ENCODE measurements at regions of chr1 and their contacts with region 1.

Region 1: GRCh38 chr1:186386725-186387383 is 11.2 kb downstream of the ODR4 start:
- DNase-seq: no peak
- H3K4me3 Mint-ChIP-seq: no peak overlapping the region
- H3K27ac Mint-ChIP-seq: no peak overlapping the region
- H3K4me1 Mint-ChIP-seq: no peaks in the 10 kb centered on the region
- H3K27me3 Mint-ChIP-seq: no peaks in the 10 kb centered on the region

Region 2: GRCh38 chr1:186375088-186375953 is 11.5 kb before region 1 on chr1 and contains the starts of genes ODR4 and TPR:
- CTCF ChIA-PET with region 1: interaction called, 24 read pairs
- DNase-seq: peak; percentile 98
- H3K4me3 Mint-ChIP-seq: peak within 1 kb of the TSS; percentile 99
- H3K27ac Mint-ChIP-seq: peak within 1 kb of the TSS; percentile 96
- H3K4me1 Mint-ChIP-seq: peaks cover 52% of the 10 kb centered on the region
- H3K27me3 Mint-ChIP-seq: peaks cover 5% of the 10 kb centered on the region